Cardiac septum (tissue), 1 donor: ENCODE measurements at regions of chr2 and their contacts with region 1.

Region 1: DNA sequence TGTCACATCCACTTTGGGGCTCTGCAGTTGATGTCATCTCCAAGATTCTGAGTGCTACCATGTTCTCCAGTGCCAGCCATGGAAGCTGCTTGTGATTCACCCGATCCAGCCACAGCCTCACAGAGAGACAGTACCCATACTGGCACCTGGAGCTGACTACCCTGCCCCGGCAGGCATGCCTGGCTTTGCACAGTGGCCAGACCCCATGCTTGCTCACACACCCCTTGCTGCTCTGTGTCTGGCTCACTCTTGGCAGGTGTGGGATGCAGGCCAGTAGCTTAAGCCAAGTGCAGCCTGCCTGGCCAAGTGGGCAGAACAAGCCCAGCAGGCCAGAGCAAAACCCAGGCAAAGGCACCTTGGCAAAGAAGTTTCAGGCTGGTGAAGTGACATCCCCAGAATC is 828.4 kb upstream of the VRK2 start:
- DNase-seq: peak; percentile 81

Region 2: DNA sequence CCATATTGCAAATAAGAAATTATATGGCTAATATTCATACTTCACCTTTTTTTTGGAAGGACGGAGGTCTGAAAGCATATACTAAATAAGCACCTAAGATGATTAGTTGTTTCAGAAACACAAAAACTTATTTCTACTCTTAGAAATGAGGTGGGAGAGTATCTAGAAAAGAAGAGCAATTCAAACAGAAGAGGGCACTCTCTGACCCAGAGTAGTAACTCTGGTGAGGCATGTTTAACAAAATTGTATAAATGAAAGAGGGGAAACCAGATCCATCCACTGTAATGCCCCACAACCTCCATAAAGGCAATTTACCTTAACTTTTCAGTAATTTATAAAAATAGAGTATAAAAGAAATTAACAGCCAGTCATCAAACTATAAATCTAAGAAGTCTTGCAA is 158.8 kb after region 1 on chr2:
- intact Hi-C with region 1: loop called (anchors 10 kb)
- DNase-seq: no peak